ENCODE measurements at regions of chr7 and their contacts with region 1.

Region 1: GRCh38 chr7:17646253-17646956 is 293.9 kb downstream of the SNX13 start:
- DNase-seq: no peak
- ATAC-seq: no peak
- H3K4me3 ChIP-seq: no peak overlapping the region
- H3K27ac ChIP-seq: no peak overlapping the region
- H3K4me1 ChIP-seq: no peaks in the 10 kb centered on the region
- H3K27me3 ChIP-seq: no peaks in the 10 kb centered on the region; a peak in 1 of 5 replicates
- CTCF ChIP-seq: peak; percentile 44
- EP300 ChIP-seq: no peak
- POLR2A ChIP-seq: no peak
- RAD21 ChIP-seq: no peak

Region 2: DNA sequence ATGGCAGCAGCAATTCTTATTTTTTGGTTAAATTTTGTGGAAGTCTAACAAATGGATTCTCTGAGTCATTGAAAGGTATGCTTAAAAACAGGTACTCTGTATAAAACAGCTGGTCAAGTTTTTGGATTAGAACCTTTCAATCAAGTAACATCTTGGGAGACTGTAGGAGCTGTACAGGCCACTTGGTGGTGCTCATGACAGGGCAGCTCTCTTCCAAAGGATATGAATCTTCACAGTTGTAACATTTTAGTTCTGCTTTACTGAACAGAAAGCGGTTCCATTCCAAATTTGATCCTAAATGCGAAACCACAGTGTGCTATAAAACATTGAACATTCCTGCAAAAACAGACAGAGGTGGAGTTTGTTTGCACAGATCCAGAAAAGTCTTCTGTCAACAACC is 720.1 kb before region 1 on chr7:
- CTCF ChIA-PET with region 1: no interaction called
- POLR2A ChIA-PET with region 1: no interaction called
- in situ Hi-C with region 1: no loop called
- intact Hi-C with region 1: loop called (anchors 1 kb)
- DNase-seq: peak; percentile 28
- ATAC-seq: peak; percentile 86
- H3K4me3 ChIP-seq: no peak overlapping the region
- H3K27ac ChIP-seq: no peak overlapping the region
- H3K4me1 ChIP-seq: peaks cover 28% of the 10 kb centered on the region
- H3K27me3 ChIP-seq: no peaks in the 10 kb centered on the region; a peak in 1 of 5 replicates
- CTCF ChIP-seq: peak; percentile 57
- EP300 ChIP-seq: no peak
- POLR2A ChIP-seq: no peak
- RAD21 ChIP-seq: peak; percentile 35; the same call in 1 of the 2 replicates

Region 3: DNA sequence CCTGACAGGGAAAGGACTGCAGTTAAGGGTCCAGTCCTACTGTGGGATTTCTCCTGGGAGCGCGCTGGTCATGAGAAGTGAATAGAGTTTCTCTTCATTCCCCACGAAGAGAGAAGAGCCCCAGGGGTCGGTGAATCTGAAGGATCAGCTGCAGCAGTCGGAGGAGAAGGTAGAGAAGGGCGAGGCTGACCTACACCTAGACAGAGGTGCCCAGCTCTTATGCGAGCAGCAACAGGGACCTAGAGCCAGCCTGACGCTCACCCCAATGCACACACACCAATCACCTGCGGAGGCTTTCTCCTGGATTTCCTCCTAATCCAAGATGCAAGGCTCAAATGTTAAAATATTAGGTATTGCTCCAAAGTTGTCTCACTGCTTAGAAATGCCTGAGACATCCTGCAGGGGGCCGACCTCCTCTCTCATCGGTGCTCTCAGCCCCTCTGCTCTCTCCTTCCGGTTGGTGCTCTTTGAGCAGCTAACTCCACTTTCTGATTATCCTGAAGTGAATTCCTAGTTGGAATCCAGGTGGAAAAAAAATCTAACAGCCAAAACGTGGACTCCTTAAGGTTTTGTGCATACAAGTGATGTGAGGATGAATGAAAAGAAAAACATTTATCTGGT is 171.6 kb before region 1 on chr7:
- CTCF ChIA-PET with region 1: no interaction called
- POLR2A ChIA-PET with region 1: no interaction called
- in situ Hi-C with region 1: no loop called
- intact Hi-C with region 1: loop called (anchors 1 kb)
- DNase-seq: peak; percentile 17
- ATAC-seq: peak; percentile 99
- H3K4me3 ChIP-seq: no peak overlapping the region
- H3K27ac ChIP-seq: no peak overlapping the region
- H3K4me1 ChIP-seq: peaks cover 6% of the 10 kb centered on the region; the same call in 1 of the 2 replicates
- H3K27me3 ChIP-seq: no peaks in the 10 kb centered on the region
- CTCF ChIP-seq: peak; percentile 67
- EP300 ChIP-seq: no peak
- POLR2A ChIP-seq: no peak
- RAD21 ChIP-seq: peak; percentile 47; the same call in 1 of the 2 replicates

Region 4: GRCh38 chr7:17608114-17608833 is 38.1 kb before region 1 on chr7:
- CTCF ChIA-PET with region 1: no interaction called
- POLR2A ChIA-PET with region 1: no interaction called
- in situ Hi-C with region 1: no loop called
- intact Hi-C with region 1: no loop called
- DNase-seq: no peak
- ATAC-seq: no peak
- H3K4me3 ChIP-seq: no peak overlapping the region
- H3K27ac ChIP-seq: no peak overlapping the region
- H3K4me1 ChIP-seq: peaks cover 10% of the 10 kb centered on the region
- H3K27me3 ChIP-seq: no peaks in the 10 kb centered on the region
- CTCF ChIP-seq: no peak
- EP300 ChIP-seq: no peak
- POLR2A ChIP-seq: no peak
- RAD21 ChIP-seq: no peak

Region 5: GRCh38 chr7:17625043-17625442 is 21.4 kb before region 1 on chr7:
- CTCF ChIA-PET with region 1: no interaction called
- POLR2A ChIA-PET with region 1: no interaction called
- in situ Hi-C with region 1: no loop called
- intact Hi-C with region 1: no loop called
- DNase-seq: no peak
- ATAC-seq: no peak
- H3K4me3 ChIP-seq: no peak overlapping the region
- H3K27ac ChIP-seq: no peak overlapping the region
- H3K4me1 ChIP-seq: peaks cover 7% of the 10 kb centered on the region
- H3K27me3 ChIP-seq: no peaks in the 10 kb centered on the region
- CTCF ChIP-seq: no peak
- EP300 ChIP-seq: no peak
- POLR2A ChIP-seq: no peak
- RAD21 ChIP-seq: no peak

Measured in HepG2 (cell line).